CD8-positive, alpha-beta memory T cell (primary cell): ENCODE measurements at regions of chr7 and their contacts with region 1.

Region 1: DNA sequence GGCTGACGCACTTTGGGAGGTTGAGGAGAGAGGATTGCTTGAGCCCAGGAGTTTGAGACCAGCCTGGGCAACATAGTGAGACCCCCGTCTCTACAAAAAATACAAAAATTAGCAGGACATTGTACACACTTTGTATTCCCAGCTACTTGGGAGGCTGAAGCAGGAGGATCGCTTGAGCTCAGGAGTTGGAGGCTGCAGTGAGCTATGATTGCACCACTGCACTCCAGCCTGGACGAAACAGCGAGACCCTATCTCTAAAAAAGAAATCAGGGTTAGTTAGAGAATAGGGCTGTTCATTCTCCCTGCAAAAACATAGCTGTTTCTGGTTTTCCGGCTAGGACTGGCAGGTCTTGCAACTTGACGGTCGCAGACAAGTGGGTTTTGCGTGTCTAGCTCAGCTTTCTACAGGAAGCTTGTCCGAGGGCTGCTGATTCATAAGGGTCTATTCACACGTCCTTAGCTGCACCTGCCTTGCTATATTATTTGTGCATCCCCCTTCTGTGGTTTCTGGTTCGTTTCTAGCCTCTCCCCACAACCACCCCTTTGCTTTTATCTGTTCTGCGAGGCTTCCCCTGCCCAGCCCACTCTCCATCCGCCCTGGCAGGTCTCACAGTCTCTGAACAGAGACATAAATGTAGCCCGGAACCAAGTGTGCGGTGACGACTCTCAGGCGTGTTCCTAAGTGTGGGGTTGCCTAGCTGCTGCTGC is 10.7 kb downstream of the AMZ1 start:
- DNase-seq: peak; percentile 38 to 90 (median 70)
- H3K4me3 ChIP-seq: no peak overlapping the region
- H3K4me3 Mint-ChIP-seq: peak overlapping the region; percentile 11 to 81 (median 66)
- H3K27ac ChIP-seq: no peak overlapping the region
- H3K27ac Mint-ChIP-seq: peak overlapping the region; percentile 8 to 89 (median 73)
- H3K4me1 ChIP-seq: peaks cover 22% of the 10 kb centered on the region
- H3K4me1 Mint-ChIP-seq: peaks cover 20 to 31% (median 22%) of the 10 kb centered on the region in 3 donors
- H3K27me3 ChIP-seq: no peaks in the 10 kb centered on the region
- H3K27me3 Mint-ChIP-seq: no peaks in the 10 kb centered on the region

Region 2: GRCh38 chr7:2715341-2716231 is 16.9 kb after region 1 on chr7:
- CTCF ChIA-PET with region 1: interaction called, 100 read pairs
- POLR2A ChIA-PET with region 1: interaction called, 22 read pairs
- DNase-seq: peak in 3 of 5 donors; percentile 56 to 71 (median 65)
- H3K4me3 ChIP-seq: peak overlapping the region; percentile 9
- H3K4me3 Mint-ChIP-seq: peak overlapping the region; percentile 47 to 82 (median 66)
- H3K27ac ChIP-seq: peak overlapping the region; percentile 0
- H3K27ac Mint-ChIP-seq: peak overlapping the region in 7 of 8 donors; percentile 66 to 94 (median 84)
- H3K4me1 ChIP-seq: peaks cover 61% of the 10 kb centered on the region
- H3K4me1 Mint-ChIP-seq: peaks cover 53 to 81% (median 73%) of the 10 kb centered on the region in 3 donors
- H3K27me3 ChIP-seq: no peaks in the 10 kb centered on the region
- H3K27me3 Mint-ChIP-seq: peaks cover 0 to 4% of the 10 kb centered on the region in 2 donors

Region 3: DNA sequence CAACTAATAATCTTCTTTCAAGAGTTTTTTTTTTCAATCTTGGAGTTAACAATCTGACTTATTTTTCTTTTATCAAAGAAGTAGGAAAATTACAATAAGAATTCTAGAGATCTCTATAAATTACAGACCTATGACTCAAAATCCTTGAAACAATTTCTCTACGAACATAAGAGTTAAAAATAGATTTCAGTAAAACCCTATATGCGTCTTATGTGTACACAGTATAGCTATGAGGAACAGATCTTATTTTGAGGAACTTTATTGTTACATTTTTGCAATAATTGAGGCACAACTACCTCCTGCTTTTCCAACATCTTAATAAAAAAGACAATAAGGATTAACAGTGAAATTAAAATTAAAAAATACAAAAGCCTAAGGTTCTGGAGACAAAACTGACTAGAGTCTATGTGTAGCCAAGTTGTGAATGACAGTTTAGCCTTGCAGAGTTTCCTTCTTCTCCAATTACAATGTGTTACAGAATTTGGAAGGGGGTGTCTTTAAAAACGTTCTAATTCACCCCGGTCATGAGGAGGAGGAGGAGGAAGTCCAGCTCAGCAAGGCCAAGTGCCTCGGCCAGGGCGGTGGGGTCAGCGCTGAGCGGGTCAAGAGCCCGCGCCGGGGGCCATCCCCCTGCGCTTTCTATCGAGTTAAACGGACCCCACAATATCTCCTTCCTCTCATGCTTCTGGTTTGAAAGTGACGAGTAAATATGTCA is 29.7 kb after region 1 on chr7:
- CTCF ChIA-PET with region 1: no interaction called
- POLR2A ChIA-PET with region 1: no interaction called
- DNase-seq: no peak
- H3K4me3 ChIP-seq: no peak overlapping the region
- H3K4me3 Mint-ChIP-seq: no peak overlapping the region
- H3K27ac ChIP-seq: no peak overlapping the region
- H3K27ac Mint-ChIP-seq: no peak overlapping the region
- H3K4me1 ChIP-seq: no peaks in the 10 kb centered on the region
- H3K4me1 Mint-ChIP-seq: peaks cover 0 to 16% (median 0%) of the 10 kb centered on the region in 3 donors
- H3K27me3 ChIP-seq: no peaks in the 10 kb centered on the region
- H3K27me3 Mint-ChIP-seq: no peaks in the 10 kb centered on the region